Activated CD8-positive, alpha-beta T cell treated with anti-CD3 and anti-CD28 coated beads, Interleukin-2, amount 10 ng/mL, durations not matched to agents 7 days and 5 days (primary cell): ENCODE measurements at regions of chr2 and their contacts with region 1.

Region 1: GRCh38 chr2:20035955-20036666 is 15.3 kb downstream of the LAPTM4A start:
- DNase-seq: no peak
- ATAC-seq: no peak
- H3K4me3 Mint-ChIP-seq: no peak overlapping the region
- H3K27ac Mint-ChIP-seq: peak overlapping the region; percentile 57
- H3K4me1 Mint-ChIP-seq: peaks cover 9% of the 10 kb centered on the region
- H3K27me3 Mint-ChIP-seq: no peaks in the 10 kb centered on the region

Region 2: GRCh38 chr2:20051532-20052228 is 15.6 kb after region 1 on chr2 and contains the start of gene LAPTM4A:
- CTCF ChIA-PET with region 1: interaction called, 20 read pairs
- POLR2A ChIA-PET with region 1: interaction called, 4 read pairs
- DNase-seq: peak; percentile 99
- ATAC-seq: peak; percentile 99
- H3K4me3 Mint-ChIP-seq: no peak within 1 kb of the TSS
- H3K27ac Mint-ChIP-seq: no peak within 1 kb of the TSS
- H3K4me1 Mint-ChIP-seq: peaks cover 24% of the 10 kb centered on the region
- H3K27me3 Mint-ChIP-seq: peaks cover 14% of the 10 kb centered on the region
- total RNA-seq, gene LAPTM4A: 19.8 to 21.1 TPM